Activated CD8-positive, alpha-beta T cell treated with anti-CD3 and anti-CD28 coated beads for 36 hours (primary cell): ENCODE measurements at regions of chr20 and their contacts with region 1.

Region 1: DNA sequence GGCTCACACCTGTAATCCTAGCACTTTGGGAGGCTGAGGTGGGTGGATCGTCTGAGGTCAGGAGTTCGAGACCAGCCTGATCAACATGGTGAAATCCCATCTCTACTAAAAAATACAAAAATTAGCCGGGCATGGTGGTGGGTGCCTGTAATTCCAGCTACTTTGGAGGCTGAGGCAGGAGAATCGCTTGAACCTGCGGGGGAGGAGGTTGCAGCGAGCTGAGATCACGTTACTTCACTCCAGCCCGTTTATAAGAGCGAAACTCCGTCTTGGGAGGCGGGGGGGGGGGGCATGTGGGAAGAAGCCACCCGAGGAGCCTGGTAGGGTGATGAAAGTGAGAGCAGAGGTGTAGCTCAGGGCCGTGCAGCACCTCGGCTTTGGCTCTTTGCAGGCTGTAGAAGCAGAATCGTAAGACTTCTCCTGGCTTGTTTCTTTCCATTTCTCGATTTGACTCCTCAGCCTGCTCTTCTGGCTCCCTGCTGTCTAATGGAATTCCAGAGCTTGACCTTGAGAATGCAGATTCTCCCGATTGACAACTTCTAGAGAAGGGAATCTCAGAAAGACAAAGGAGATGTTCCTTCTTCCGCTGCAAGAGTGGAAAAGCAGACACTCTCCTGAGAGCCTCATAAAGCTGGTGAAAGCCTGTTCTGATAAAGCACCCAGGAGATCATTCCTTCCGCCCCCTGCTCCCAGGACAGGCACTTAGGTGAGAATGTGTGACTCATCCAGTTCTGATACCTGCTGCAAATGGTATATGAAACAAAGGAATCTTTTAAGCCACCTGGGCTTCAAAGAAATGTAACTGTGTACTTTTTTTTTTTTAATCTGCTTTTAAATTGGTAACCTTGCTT is 26.0 kb upstream of the PPP1R16B start:
- DNase-seq: no peak
- ATAC-seq: no peak
- H3K4me3 Mint-ChIP-seq: no peak overlapping the region
- H3K27ac Mint-ChIP-seq: no peak overlapping the region
- H3K4me1 Mint-ChIP-seq: peaks cover 7% of the 10 kb centered on the region
- H3K27me3 Mint-ChIP-seq: no peaks in the 10 kb centered on the region
- CTCF ChIP-seq: no peak

Region 2: DNA sequence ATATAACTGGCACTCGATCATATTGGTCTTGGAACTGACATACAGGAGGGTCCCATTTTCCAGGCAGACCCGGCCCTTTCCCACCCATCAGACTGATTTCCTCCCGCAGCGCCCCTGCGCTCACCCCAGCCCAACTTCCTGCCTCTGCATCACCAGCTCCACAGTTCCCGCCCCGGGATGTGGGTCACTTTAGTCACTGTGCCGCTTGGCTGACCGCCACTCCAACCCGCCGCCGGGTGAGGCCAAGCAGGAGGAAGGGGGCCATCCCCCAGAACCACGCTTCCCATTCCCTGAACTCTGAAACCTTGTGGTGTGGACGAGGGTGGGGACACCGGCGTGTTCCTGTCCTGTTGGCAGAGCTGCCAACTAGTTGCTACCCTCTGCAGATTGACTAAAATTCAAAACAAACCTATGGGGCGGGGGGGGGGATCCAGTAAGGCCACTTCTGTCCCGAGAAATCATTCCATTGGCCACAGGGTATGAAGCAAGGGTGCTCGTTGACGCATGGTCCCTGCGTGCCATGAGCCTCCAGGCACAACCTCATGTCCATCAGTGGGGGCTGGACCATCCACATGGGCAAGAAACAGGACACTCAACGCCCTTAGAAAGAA is 626.7 kb before region 1 on chr20:
- CTCF ChIA-PET with region 1: no interaction called
- POLR2A ChIA-PET with region 1: no interaction called
- intact Hi-C with region 1: no loop called
- DNase-seq: peak; percentile 40
- ATAC-seq: peak; percentile 67
- H3K4me3 Mint-ChIP-seq: peak overlapping the region; percentile 19
- H3K27ac Mint-ChIP-seq: no peak overlapping the region
- H3K4me1 Mint-ChIP-seq: peaks cover 7% of the 10 kb centered on the region
- H3K27me3 Mint-ChIP-seq: peaks cover 14% of the 10 kb centered on the region
- CTCF ChIP-seq: no peak

Region 3: GRCh38 chr20:38790200-38791053 is 11.0 kb after region 1 on chr20:
- CTCF ChIA-PET with region 1: interaction called, 14 read pairs
- POLR2A ChIA-PET with region 1: no interaction called
- intact Hi-C with region 1: no loop called
- DNase-seq: peak; percentile 65
- ATAC-seq: peak; percentile 74
- H3K4me3 Mint-ChIP-seq: no peak overlapping the region
- H3K27ac Mint-ChIP-seq: no peak overlapping the region
- H3K4me1 Mint-ChIP-seq: peaks cover 17% of the 10 kb centered on the region
- H3K27me3 Mint-ChIP-seq: no peaks in the 10 kb centered on the region
- CTCF ChIP-seq: peak; percentile 72